ENCODE measurements at regions of chr2 and their contacts with region 1.

Region 1: DNA sequence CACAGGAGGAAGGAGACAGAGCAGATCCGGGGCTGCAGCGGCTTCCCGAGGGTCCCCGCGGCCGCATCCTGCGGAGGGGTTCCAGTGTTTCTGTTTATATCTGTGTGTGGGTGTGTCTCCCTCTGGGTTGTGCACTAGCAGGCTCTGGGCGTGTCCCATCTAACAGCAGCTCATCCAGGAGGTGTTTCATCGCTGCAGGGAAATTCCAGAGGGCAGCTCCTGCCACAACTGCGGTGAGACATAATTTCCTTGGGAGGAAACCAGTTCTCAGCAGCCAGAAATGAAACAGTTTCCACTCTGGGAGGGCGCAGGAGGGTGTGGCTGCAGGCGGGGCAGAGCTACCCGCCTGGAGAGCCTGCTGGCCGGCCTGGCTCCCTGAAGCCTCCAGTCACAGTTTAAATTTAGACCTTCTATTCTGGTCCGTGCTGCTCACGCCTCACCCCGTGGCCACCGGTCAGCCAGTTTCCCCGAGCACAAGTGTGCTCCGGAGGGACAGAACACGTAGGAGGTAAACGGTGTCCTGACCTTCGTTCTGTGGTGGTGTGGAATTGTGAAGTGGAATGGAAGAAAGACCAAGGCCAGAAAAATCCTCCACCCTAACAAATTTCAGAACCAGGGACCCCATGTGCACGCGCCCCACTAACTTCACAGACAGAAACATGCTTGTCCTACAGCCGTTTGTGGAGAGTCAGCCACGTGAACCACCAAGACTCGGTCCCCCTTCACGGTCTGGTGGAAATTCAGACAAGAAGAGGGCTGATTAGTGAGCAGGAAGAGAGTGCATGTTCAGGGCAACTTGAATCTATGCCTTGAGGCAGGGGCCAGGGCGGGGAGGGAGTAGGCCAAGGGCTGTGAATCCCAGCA is 50.2 kb downstream of the TEX44 start:
- DNase-seq: peak; percentile 68
- H3K4me3 Mint-ChIP-seq: peak overlapping the region; percentile 66
- H3K27ac Mint-ChIP-seq: peak overlapping the region; percentile 89
- H3K4me1 Mint-ChIP-seq: peaks cover 26% of the 10 kb centered on the region
- H3K27me3 Mint-ChIP-seq: no peaks in the 10 kb centered on the region

Region 2: GRCh38 chr2:231632559-231633142 is 10.2 kb before region 1 on chr2:
- CTCF ChIA-PET with region 1: interaction called, 10 read pairs
- POLR2A ChIA-PET with region 1: interaction called, 3 read pairs
- DNase-seq: no peak
- H3K4me3 Mint-ChIP-seq: no peak overlapping the region
- H3K27ac Mint-ChIP-seq: no peak overlapping the region
- H3K4me1 Mint-ChIP-seq: peaks cover 16% of the 10 kb centered on the region
- H3K27me3 Mint-ChIP-seq: no peaks in the 10 kb centered on the region

Region 3: GRCh38 chr2:231745303-231746038 is 102.6 kb after region 1 on chr2:
- CTCF ChIA-PET with region 1: no interaction called
- POLR2A ChIA-PET with region 1: no interaction called
- DNase-seq: no peak
- H3K4me3 Mint-ChIP-seq: no peak overlapping the region
- H3K27ac Mint-ChIP-seq: no peak overlapping the region
- H3K4me1 Mint-ChIP-seq: peaks cover 6% of the 10 kb centered on the region
- H3K27me3 Mint-ChIP-seq: no peaks in the 10 kb centered on the region

Measured in activated CD4-positive, alpha-beta T cell treated with anti-CD3 and anti-CD28 coated beads, Interleukin-2, amount 10 ng/mL, durations not matched to agents 7 days and 5 days (primary cell).